Right ventricle myocardium inferior (tissue), 1 donor: ENCODE measurements at regions of chr14 and their contacts with region 1.

Region 1: GRCh38 chr14:22872033-22872832 is 693 bp downstream of the LRP10 start:
- DNase-seq: peak; percentile 84
- ATAC-seq: peak; percentile 59

Region 2: DNA sequence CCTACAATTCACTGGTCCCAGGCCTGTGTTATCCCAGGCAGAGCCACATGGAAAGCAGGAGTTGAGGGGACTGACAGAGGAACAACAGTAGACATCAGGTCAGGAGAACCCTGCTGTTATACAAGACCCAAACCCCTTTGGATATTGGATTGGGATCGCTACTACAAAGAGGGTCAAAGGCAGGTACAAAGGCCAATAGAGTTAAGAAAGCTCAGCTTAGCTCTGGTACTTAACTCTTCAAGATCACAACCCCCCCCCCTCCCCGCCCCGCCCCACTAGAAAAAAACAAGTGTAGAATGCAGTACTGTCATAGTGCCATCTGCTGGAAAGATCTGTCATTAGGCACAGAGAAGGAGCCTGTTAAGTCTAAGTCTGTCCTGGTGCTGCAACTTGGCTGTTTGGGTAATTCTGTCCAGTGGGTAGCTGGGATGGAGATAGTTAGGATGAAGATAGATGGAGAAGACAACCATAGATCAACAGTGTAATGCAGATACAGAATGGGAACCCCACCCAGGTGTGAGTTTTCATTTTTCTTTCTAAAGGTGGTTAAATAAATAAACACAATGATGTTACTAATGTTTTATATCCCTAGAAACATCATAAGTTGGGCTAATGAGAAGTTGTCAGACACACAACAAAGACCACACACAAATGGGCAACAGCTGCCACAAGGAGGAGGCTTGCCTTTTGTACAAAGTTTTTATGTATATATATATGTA is 28.0 kb after region 1 on chr14:
- intact Hi-C with region 1: loop called (anchors 2 kb)
- DNase-seq: no peak
- ATAC-seq: peak; percentile 59

Region 3: GRCh38 chr14:22918804-22919600 is 46.8 kb after region 1 on chr14 and contains the start of gene RBM23:
- intact Hi-C with region 1: loop called (anchors 5 kb)
- DNase-seq: peak; percentile 100
- ATAC-seq: peak; percentile 95
- total RNA-seq, gene RBM23: 40.3 TPM

Region 4: GRCh38 chr14:22929104-22929847 is 57.0 kb after region 1 on chr14 and contains the start of gene PRMT5:
- intact Hi-C with region 1: loop called (anchors 2 kb)
- DNase-seq: peak; percentile 98
- ATAC-seq: peak; percentile 98
- total RNA-seq, gene PRMT5: 48.7 TPM